IMR-90 (cell line): ENCODE measurements at regions of chr5 and their contacts with region 1.

Region 1: DNA sequence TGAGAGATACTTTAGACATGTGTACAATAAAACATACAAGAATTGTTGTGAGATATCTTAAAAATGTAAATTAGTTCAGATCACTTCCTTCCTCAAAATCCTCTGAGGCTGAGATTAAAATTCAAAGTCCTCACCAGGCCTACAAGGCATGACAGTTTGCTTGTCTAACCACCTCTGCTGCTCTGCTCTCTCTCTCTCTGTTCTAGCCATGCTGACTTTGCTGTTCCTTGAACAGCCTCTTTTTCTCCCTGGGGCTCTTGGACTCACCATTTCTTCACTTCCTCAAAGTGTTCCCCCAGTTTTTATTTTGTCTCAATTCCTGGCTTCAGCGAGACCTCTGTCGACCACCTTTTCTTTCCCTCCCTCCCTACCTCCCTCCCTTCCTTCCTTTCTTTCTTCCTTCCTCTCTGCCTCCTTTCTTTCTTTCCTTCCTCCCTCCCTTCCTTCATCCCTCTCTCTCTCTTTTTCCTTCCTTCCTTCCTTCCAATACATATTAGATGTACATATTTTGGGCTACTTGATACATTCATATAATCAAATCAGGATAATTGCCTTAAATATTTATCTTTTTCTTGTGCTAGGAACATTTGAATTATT is 27.0 kb downstream of the CATSPER3 start:
- DNase-seq: no peak
- ATAC-seq: no peak
- H3K4me3 ChIP-seq: no peak overlapping the region
- H3K27ac ChIP-seq: no peak overlapping the region
- H3K4me1 ChIP-seq: no peaks in the 10 kb centered on the region
- H3K27me3 ChIP-seq: no peaks in the 10 kb centered on the region
- CTCF ChIP-seq: no peak
- POLR2A ChIP-seq: no peak
- RAD21 ChIP-seq: no peak

Region 2: GRCh38 chr5:134935711-134936602 is 58.7 kb before region 1 on chr5:
- CTCF ChIA-PET with region 1: interaction called, 3 read pairs
- POLR2A ChIA-PET with region 1: no interaction called
- dilution Hi-C with region 1: no loop called
- in situ Hi-C with region 1: no loop called
- intact Hi-C with region 1: loop called (anchors 10 kb)
- DNase-seq: no peak
- ATAC-seq: no peak
- H3K4me3 ChIP-seq: no peak overlapping the region
- H3K27ac ChIP-seq: no peak overlapping the region
- H3K4me1 ChIP-seq: no peaks in the 10 kb centered on the region
- H3K27me3 ChIP-seq: no peaks in the 10 kb centered on the region
- CTCF ChIP-seq: no peak
- POLR2A ChIP-seq: no peak
- RAD21 ChIP-seq: no peak